ENCODE measurements at regions of chr9 and their contacts with region 1.

Region 1: GRCh38 chr9:91582181-91582580 is 158.5 kb upstream of the NFIL3 start:
- DNase-seq: no peak
- ATAC-seq: no peak
- H3K4me3 ChIP-seq: no peak overlapping the region
- H3K27ac ChIP-seq: no peak overlapping the region
- H3K4me1 ChIP-seq: no peaks in the 10 kb centered on the region
- H3K27me3 ChIP-seq: no peaks in the 10 kb centered on the region
- CTCF ChIP-seq: no peak

Region 2: DNA sequence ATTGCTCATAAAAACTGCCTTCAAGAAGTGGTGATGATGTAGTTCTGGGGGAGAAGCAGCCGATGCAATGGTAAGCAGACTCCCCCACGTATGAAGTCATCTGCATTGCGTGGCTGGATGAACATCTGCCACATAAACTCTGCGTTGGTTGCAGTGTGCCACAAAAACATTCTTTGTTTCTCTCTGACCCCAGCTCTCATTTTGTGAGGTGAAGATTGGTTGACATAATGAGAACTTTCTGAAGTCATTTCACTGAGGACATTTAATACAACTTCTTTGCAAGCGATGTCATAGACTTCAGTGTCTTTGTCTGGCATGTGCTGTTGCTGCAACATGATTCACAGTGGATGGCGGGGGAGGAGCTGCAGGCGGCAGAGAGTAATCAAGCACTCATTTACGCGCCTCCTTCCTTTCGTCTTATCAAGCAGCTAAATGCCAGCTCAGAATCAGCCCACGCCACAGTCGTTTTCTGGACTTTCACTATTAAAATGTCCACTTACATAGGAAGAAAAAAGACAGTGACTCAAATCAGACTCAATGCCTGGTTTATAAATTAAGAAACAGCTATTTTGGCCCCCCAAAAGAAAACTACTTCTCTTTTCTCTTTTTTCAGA is 67.0 kb before region 1 on chr9:
- CTCF ChIA-PET with region 1: no interaction called
- POLR2A ChIA-PET with region 1: no interaction called
- in situ Hi-C with region 1: no loop called
- intact Hi-C with region 1: no loop called
- DNase-seq: peak; percentile 12
- ATAC-seq: no peak
- H3K4me3 ChIP-seq: no peak overlapping the region
- H3K27ac ChIP-seq: no peak overlapping the region
- H3K4me1 ChIP-seq: no peaks in the 10 kb centered on the region
- H3K27me3 ChIP-seq: no peaks in the 10 kb centered on the region
- CTCF ChIP-seq: no peak

Region 3: DNA sequence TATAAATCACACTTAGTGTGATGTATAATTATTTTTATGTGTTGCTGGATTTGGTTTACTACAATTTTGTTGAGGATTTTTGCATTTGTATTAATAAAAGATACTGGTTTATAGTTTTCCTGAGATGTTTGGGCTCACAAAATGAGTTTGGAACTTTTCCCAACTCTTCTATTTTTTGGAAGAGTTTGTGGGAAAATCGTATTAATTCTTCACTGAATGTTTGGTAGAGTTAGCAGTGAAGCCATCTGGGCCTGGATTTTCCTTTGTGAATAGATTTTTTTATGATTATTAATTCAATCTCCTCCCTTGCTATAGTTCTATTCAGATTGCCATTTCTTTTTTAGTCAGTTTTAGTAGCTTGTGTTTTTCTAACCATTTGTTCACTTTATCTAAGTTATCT is 43.1 kb after region 1 on chr9:
- CTCF ChIA-PET with region 1: no interaction called
- POLR2A ChIA-PET with region 1: interaction called, 10 read pairs
- in situ Hi-C with region 1: no loop called
- intact Hi-C with region 1: no loop called
- DNase-seq: no peak
- ATAC-seq: no peak
- H3K4me3 ChIP-seq: no peak overlapping the region
- H3K27ac ChIP-seq: no peak overlapping the region
- H3K4me1 ChIP-seq: no peaks in the 10 kb centered on the region
- H3K27me3 ChIP-seq: 0 out of 2 replicates have a peak, but pooled peaks cover 2% of the 10 kb centered on the region
- CTCF ChIP-seq: no peak

Region 4: DNA sequence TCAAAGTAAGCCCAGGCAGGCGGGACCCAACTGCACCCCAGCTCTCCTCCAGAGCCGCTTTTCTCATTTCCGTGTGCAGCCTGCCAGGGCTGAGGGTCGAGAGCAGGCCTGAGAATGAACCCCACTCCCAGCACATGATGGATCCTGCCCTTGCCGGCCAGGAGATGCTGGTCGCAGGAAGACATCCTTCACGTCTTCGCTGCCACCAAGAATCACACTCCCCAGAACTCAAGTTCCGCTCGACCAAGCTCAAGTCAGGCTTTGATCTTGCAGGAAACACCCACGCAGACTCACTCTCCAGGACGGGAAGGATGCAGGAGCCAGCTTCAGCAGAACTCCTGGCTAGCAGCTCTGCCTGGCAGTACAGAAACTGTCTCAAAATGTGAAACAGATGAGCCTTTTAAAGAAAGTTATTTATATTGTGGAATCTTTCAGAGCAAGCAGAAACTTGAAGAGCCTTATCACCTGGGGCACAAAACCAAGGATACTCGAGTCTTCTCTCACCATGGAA is 265.5 kb after region 1 on chr9:
- CTCF ChIA-PET with region 1: no interaction called
- POLR2A ChIA-PET with region 1: no interaction called
- in situ Hi-C with region 1: no loop called
- intact Hi-C with region 1: no loop called
- DNase-seq: no peak
- ATAC-seq: no peak
- H3K4me3 ChIP-seq: no peak overlapping the region
- H3K27ac ChIP-seq: no peak overlapping the region
- H3K4me1 ChIP-seq: no peaks in the 10 kb centered on the region
- H3K27me3 ChIP-seq: no peaks in the 10 kb centered on the region
- CTCF ChIP-seq: no peak